ENCODE measurements at regions of chr1 and their contacts with region 1.

Region 1: GRCh38 chr1:112369392-112370285 is 26.4 kb upstream of the CTTNBP2NL start:
- DNase-seq: peak; percentile 90
- H3K4me3 Mint-ChIP-seq: no peak overlapping the region
- H3K27ac Mint-ChIP-seq: no peak overlapping the region
- H3K4me1 Mint-ChIP-seq: peaks cover 3% of the 10 kb centered on the region
- H3K27me3 Mint-ChIP-seq: peaks cover 32% of the 10 kb centered on the region

Region 2: GRCh38 chr1:111769517-111770146 is 600.0 kb before region 1 on chr1:
- CTCF ChIA-PET with region 1: no interaction called
- intact Hi-C with region 1: loop called (anchors 10 kb)
- DNase-seq: peak; percentile 67
- H3K4me3 Mint-ChIP-seq: no peak overlapping the region
- H3K27ac Mint-ChIP-seq: no peak overlapping the region
- H3K4me1 Mint-ChIP-seq: peaks cover 12% of the 10 kb centered on the region
- H3K27me3 Mint-ChIP-seq: no peaks in the 10 kb centered on the region

Region 3: GRCh38 chr1:112196731-112197130 is 172.9 kb before region 1 on chr1:
- CTCF ChIA-PET with region 1: no interaction called
- intact Hi-C with region 1: no loop called
- DNase-seq: no peak
- H3K4me3 Mint-ChIP-seq: no peak overlapping the region
- H3K27ac Mint-ChIP-seq: no peak overlapping the region
- H3K4me1 Mint-ChIP-seq: no peaks in the 10 kb centered on the region
- H3K27me3 Mint-ChIP-seq: peaks cover under 1% of the 10 kb centered on the region

Region 4: DNA sequence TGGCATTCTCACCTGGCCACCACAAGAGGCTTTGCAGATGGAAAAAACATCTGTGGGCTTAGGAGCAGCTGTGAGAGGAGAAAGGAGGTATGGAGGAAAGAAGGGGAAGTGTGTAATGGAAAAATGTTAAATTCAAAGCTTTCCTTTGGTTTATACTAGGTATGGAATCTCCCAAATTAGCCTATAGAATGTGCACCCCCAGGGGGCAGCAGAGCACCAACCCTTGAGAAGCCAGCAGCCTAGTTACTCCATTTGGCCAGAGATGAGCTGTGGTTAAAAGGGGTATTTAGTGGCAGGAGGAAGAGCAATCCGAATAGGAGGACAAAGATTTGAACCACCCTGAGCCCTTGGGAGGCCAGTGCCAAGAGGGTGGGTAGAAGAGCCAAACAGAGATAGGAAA is 71.1 kb before region 1 on chr1:
- CTCF ChIA-PET with region 1: interaction called, 9 read pairs
- intact Hi-C with region 1: loop called (anchors 2 kb)
- DNase-seq: peak; percentile 65
- H3K4me3 Mint-ChIP-seq: no peak overlapping the region
- H3K27ac Mint-ChIP-seq: no peak overlapping the region
- H3K4me1 Mint-ChIP-seq: no peaks in the 10 kb centered on the region
- H3K27me3 Mint-ChIP-seq: peaks cover 11% of the 10 kb centered on the region

Region 5: DNA sequence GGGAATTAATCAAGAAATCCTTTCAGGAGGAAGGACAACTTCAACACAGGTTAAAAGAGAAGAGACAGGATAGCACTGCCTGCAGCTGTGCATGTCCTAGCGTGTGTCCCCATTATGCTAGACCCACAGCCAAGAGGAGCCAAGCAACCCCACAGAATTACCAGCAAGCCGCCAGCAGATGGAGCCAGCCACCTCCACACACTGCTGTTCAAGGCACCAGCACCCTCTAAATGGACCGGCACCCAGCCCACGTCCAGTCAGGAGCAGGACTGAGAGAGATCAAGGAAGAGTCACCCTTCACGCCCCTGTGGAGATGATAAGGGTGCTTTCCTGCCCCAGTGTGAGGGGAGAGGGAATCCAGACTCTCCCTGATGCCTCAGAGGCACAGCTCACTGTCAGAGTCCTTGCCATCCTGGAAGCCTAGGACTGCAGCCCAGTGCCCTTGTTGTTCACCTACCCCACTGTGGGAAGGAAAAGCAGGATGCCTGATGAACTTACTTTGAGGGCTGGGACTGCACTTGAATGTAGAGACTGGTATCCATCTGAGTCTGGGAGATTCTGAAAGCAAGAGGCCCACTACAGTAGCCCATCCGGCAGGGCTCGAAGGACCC is 10.7 kb before region 1 on chr1:
- CTCF ChIA-PET with region 1: interaction called, 51 read pairs
- intact Hi-C with region 1: loop called (anchors 1 kb)
- DNase-seq: peak; percentile 55
- H3K4me3 Mint-ChIP-seq: no peak overlapping the region
- H3K27ac Mint-ChIP-seq: no peak overlapping the region
- H3K4me1 Mint-ChIP-seq: no peaks in the 10 kb centered on the region
- H3K27me3 Mint-ChIP-seq: peaks cover 17% of the 10 kb centered on the region

Region 6: DNA sequence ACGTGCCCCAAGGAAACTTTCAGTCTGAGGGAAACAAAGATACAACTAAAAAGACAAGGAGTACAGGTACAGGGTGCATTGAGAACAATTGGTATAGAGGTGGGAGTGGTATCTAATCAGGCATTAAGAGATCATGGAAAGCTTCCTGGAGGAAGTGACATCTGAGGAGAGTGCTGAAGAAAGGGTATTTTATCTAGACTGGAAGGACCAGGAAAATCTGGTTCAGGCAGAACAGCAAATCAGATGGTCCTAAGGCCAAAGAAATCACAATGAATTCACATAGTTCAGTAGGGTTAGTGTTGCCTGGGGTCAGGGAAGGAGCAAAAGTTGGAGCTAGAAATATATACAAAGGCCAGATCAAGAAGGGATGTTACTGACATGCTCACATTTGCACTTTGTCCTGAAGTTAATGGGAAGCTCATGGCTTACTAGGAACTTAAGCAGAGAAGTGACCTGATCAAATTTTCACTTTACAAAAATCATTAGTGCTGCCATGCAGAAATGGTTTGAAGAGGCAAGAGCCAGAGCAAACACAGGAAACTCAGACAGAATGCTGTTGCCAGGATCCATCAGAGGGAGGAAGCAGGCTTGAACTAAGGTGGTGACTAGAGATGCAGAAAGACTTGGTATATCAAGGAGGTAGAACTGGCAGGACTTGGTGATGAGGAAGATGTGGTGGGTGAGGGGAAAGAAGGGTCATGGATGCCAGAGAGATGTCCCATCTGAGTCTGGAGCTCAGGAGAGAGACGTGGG is 11.9 kb after region 1 on chr1:
- CTCF ChIA-PET with region 1: interaction called, 22 read pairs
- intact Hi-C with region 1: no loop called
- DNase-seq: no peak
- H3K4me3 Mint-ChIP-seq: no peak overlapping the region
- H3K27ac Mint-ChIP-seq: no peak overlapping the region
- H3K4me1 Mint-ChIP-seq: no peaks in the 10 kb centered on the region
- H3K27me3 Mint-ChIP-seq: peaks cover 22% of the 10 kb centered on the region

Region 7: GRCh38 chr1:112423207-112423606 is 53.6 kb after region 1 on chr1:
- CTCF ChIA-PET with region 1: no interaction called
- intact Hi-C with region 1: no loop called
- DNase-seq: no peak
- H3K4me3 Mint-ChIP-seq: no peak overlapping the region
- H3K27ac Mint-ChIP-seq: no peak overlapping the region
- H3K4me1 Mint-ChIP-seq: no peaks in the 10 kb centered on the region
- H3K27me3 Mint-ChIP-seq: peaks cover 4% of the 10 kb centered on the region